ENCODE measurements at regions of chr15 and their contacts with region 1.

Region 1: GRCh38 chr15:22850055-22850454 is 11.6 kb downstream of the NIPA2 start:
- DNase-seq: no peak
- ATAC-seq: no peak

Region 2: DNA sequence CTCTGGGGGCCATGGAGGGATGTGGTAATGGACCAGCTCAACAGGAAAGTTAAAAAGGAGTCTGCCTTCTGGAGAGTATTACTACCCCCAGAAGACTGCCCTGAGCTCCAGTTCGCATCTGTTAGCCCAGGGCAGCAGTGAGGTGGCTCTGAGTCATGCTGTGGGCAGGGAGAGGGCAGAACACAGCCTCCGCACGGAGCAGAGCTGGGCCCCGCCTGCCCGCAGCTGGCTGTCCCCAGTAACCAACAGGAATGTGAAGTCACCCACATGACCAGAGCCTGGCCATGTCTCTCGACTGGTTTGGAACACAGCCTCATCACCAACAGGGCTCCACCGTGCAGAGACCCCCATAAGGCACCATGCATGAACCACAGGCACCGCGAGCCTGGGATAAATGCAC is 68.0 kb after region 1 on chr15:
- intact Hi-C with region 1: loop called (anchors 10 kb)
- DNase-seq: no peak
- ATAC-seq: no peak

Region 3: GRCh38 chr15:23081271-23081670 is 231.2 kb after region 1 on chr15:
- intact Hi-C with region 1: no loop called
- DNase-seq: no peak
- ATAC-seq: no peak